Activated CD4-positive, alpha-beta memory T cell treated with anti-CD3 and anti-CD28 coated beads for 36 hours (primary cell): ENCODE measurements at regions of chrX and their contacts with region 1.

Region 1: GRCh38 chrX:129606918-129607317 is 47.8 kb downstream of the APLN start:
- DNase-seq: peak; percentile 55
- H3K4me3 Mint-ChIP-seq: no peak overlapping the region
- H3K27ac Mint-ChIP-seq: no peak overlapping the region
- H3K4me1 Mint-ChIP-seq: peaks cover 15% of the 10 kb centered on the region
- H3K27me3 Mint-ChIP-seq: no peaks in the 10 kb centered on the region

Region 2: DNA sequence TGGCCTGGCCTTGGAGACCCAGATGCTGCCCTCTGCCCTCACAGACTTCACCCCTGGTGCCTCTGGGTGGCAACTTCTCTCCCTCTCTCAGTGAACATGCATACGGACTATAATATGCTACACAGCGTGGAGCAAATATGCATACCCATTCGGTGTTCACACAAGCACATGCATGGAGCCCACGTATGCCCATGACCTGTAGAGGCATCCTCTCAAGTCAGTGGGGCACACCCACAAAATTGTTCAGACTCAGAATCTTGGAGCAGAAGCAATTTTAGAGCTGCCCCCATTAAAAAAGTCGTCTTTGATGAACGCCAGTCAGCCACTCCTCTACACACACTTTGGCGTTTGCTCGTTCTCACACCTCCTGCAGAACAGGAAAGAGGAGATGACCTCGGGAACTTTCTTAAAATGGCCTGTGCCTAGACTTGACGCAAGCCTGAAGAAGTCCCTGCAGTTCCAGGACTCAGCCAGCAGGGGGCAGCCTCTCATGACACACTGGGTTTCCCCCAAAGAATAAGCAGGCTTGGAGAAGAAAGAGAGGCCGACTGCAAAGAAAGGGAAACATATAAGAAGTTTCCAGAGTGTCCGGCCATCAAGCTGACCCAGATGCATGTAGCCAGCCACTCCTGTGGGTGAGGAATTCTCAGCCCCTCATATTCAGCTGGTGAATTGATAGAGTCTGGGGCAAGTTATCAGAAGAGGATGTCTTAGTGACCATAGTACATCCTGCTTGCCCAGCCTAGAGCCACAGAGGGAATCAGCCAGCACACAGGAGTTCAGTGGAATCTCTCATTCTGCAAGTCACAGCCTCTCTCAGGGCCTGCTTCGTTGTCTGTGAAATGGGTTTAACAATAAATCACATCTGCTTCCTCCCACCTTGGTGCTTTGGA is 30.5 kb after region 1 on chrX:
- CTCF ChIA-PET with region 1: interaction called, 8 read pairs
- POLR2A ChIA-PET with region 1: no interaction called
- intact Hi-C with region 1: loop called (anchors 2 kb)
- DNase-seq: peak; percentile 83
- H3K4me3 Mint-ChIP-seq: no peak overlapping the region
- H3K27ac Mint-ChIP-seq: no peak overlapping the region
- H3K4me1 Mint-ChIP-seq: no peaks in the 10 kb centered on the region
- H3K27me3 Mint-ChIP-seq: no peaks in the 10 kb centered on the region

Region 3: DNA sequence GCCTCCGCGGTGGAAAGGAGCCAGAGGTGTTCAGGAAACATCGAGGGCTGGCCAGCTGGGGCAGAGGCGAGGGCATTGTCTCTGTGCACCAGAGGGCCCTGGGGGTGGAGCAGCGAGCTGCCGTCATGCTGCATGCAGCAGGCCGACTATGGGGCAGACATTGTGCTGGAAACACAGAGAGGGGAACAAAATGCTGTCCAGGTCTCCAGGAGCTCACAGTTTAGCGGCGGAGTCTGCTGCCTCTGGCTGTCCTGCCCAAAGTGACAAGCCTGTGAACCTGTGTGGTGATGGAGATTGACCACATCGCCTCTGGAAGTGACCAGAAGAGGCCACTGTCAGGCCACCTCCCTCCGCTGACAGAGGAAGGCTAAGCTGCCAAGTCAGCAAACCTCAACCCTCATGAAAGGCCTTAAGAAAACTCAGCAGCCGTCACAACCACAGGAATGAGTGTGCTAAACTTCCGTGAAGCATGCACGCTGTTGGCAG is 152.7 kb after region 1 on chrX:
- CTCF ChIA-PET with region 1: no interaction called
- POLR2A ChIA-PET with region 1: no interaction called
- intact Hi-C with region 1: loop called (anchors 10 kb)
- DNase-seq: peak; percentile 81
- H3K4me3 Mint-ChIP-seq: peak overlapping the region; percentile 46
- H3K27ac Mint-ChIP-seq: peak overlapping the region; percentile 90
- H3K4me1 Mint-ChIP-seq: peaks cover 57% of the 10 kb centered on the region
- H3K27me3 Mint-ChIP-seq: no peaks in the 10 kb centered on the region

Region 4: GRCh38 chrX:129905787-129906580 is 299.1 kb after region 1 on chrX and contains the start of gene UTP14A:
- CTCF ChIA-PET with region 1: interaction called, 9 read pairs
- POLR2A ChIA-PET with region 1: no interaction called
- intact Hi-C with region 1: loop called (anchors 5 kb)
- DNase-seq: peak; percentile 92
- H3K4me3 Mint-ChIP-seq: peak within 1 kb of the TSS; percentile 88
- H3K27ac Mint-ChIP-seq: peak within 1 kb of the TSS; percentile 88
- H3K4me1 Mint-ChIP-seq: peaks cover 23% of the 10 kb centered on the region
- H3K27me3 Mint-ChIP-seq: no peaks in the 10 kb centered on the region
- total RNA-seq, gene UTP14A: 29.9 to 31.7 TPM

Region 5: DNA sequence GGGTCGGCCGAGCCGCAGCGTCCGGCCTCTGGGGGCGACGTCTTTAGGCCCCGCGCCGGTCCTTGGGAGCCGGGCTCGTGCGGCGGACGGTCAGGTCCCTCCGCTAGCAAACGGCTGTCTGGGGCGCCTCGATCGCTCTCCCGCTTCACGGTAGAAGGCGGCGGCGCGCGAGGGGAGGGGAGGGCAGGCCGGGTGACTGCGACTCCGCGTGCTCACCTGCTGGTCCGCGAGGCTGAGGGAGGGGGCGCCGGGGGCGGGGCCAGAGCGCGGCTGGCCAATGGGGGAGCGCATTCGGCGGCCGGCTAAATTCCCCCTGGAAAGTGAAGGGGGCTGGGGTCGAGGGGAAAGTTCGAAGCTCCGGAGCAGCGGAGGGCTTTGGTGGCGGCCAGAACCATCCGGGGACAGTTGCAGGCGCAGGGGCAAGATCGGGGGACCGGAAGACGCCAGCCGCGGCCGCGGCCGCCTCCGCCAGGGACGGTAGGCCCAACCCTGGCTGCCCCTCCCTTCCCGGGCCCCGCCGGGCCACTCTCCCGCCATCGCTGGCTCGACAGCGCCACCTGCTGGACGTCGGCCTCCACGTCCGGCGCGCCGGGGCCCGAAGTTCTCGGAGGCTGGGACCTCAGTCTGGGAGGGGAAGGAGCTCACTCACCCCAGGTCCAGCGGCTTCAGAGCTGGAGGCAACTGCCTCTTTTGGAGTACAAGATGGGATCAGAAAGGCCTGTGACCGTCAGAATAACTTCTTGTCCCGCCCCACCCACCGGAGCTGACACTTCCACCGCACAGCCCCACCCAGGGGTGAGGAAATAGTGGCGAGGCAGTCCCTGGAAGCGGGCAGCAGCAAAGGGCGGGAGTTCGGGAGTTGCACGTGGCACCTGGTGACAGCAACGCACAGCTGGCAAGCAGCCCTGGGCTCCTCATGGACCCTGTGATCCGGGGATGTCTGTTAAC is 453.5 kb after region 1 on chrX:
- CTCF ChIA-PET with region 1: interaction called, 16 read pairs
- POLR2A ChIA-PET with region 1: no interaction called
- intact Hi-C with region 1: loop called (anchors 1 kb)
- DNase-seq: peak; percentile 88
- H3K4me3 Mint-ChIP-seq: peak overlapping the region; percentile 73
- H3K27ac Mint-ChIP-seq: peak overlapping the region; percentile 60
- H3K4me1 Mint-ChIP-seq: peaks cover 6% of the 10 kb centered on the region
- H3K27me3 Mint-ChIP-seq: no peaks in the 10 kb centered on the region